Activated T-helper 2 cell treated with anti-CD3 and anti-CD28 coated beads, Interferon-gamma antibody, Interleukin-2, Interleukin-4, amounts not matched to agents 10 μg/mL and 5 μg/mL and 100 μg/mL, durations not matched to agents 14 hours and 24 hours and 36 hours (primary cell): ENCODE measurements at regions of chr4 and their contacts with region 1.

Region 1: GRCh38 chr4:143513306-143514168 is at the start of gene SMARCA5:
- DNase-seq: peak; percentile 97
- H3K4me3 Mint-ChIP-seq: peak within 1 kb of the TSS; percentile 98
- H3K27ac Mint-ChIP-seq: peak within 1 kb of the TSS; percentile 90
- H3K4me1 Mint-ChIP-seq: peaks cover 23% of the 10 kb centered on the region
- H3K27me3 Mint-ChIP-seq: peaks cover 16% of the 10 kb centered on the region
- total RNA-seq, gene SMARCA5: 56.6 and 57.8 TPM in 2 replicates

Region 2: GRCh38 chr4:143184217-143185116 is 329.1 kb before region 1 on chr4 and contains the start of gene USP38:
- intact Hi-C with region 1: loop called (anchors 1 kb)
- DNase-seq: peak; percentile 81
- H3K4me3 Mint-ChIP-seq: peak within 1 kb of the TSS; percentile 89
- H3K27ac Mint-ChIP-seq: peak within 1 kb of the TSS; percentile 96
- H3K4me1 Mint-ChIP-seq: peaks cover 31% of the 10 kb centered on the region
- H3K27me3 Mint-ChIP-seq: no peaks in the 10 kb centered on the region
- total RNA-seq, gene USP38: 23.5 and 26.2 TPM in 2 replicates

Region 3: GRCh38 chr4:143335979-143336780 is 177.4 kb before region 1 on chr4:
- intact Hi-C with region 1: loop called (anchors 1 kb)
- DNase-seq: peak; percentile 23
- H3K4me3 Mint-ChIP-seq: peak overlapping the region; percentile 88
- H3K27ac Mint-ChIP-seq: no peak overlapping the region
- H3K4me1 Mint-ChIP-seq: peaks cover 6% of the 10 kb centered on the region
- H3K27me3 Mint-ChIP-seq: peaks cover 43% of the 10 kb centered on the region

Region 4: DNA sequence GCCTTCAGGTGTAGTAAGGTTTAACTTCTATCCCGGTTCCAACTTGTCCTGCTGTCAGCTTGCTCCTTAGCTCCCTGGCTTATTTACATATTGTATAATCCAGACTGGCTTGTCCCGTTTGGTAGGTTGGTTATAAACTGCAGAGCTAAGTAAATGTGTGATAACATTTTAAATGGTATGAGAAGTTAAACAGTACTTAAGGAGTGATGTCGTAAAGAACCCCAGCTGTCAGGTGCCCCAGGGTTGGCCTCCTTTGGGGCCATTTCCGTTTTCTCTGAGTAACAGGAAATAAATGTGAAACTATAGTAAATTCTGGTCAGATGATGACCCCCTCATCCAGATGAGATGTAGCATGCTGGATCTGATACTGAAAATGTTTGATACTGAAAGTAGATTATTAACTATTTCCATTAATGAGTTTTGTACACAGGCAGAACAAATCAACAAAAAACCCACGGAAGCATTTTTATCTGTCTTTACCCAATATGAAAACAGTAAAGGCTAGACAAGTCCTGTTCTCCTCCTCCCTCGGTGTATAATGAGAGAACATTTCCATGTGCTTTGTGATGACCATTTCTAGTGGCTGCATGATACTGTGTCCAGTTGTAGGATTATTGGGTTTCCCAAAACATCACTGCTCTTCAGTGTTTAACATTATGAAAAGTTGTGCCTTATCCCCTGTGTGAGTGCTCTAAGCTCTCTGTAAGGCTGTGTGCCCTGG is 154.5 kb before region 1 on chr4:
- intact Hi-C with region 1: loop called (anchors 1 kb)
- DNase-seq: peak; percentile 13
- H3K4me3 Mint-ChIP-seq: peak overlapping the region; percentile 58
- H3K27ac Mint-ChIP-seq: peak overlapping the region; percentile 89
- H3K4me1 Mint-ChIP-seq: peaks cover 27% of the 10 kb centered on the region
- H3K27me3 Mint-ChIP-seq: peaks cover 13% of the 10 kb centered on the region

Region 5: GRCh38 chr4:143558823-143559756 is 45.6 kb after region 1 on chr4:
- intact Hi-C with region 1: loop called (anchors 1 kb)
- DNase-seq: peak; percentile 55
- H3K4me3 Mint-ChIP-seq: peak overlapping the region; percentile 88
- H3K27ac Mint-ChIP-seq: peak overlapping the region; percentile 87
- H3K4me1 Mint-ChIP-seq: peaks cover 20% of the 10 kb centered on the region
- H3K27me3 Mint-ChIP-seq: no peaks in the 10 kb centered on the region

Region 6: DNA sequence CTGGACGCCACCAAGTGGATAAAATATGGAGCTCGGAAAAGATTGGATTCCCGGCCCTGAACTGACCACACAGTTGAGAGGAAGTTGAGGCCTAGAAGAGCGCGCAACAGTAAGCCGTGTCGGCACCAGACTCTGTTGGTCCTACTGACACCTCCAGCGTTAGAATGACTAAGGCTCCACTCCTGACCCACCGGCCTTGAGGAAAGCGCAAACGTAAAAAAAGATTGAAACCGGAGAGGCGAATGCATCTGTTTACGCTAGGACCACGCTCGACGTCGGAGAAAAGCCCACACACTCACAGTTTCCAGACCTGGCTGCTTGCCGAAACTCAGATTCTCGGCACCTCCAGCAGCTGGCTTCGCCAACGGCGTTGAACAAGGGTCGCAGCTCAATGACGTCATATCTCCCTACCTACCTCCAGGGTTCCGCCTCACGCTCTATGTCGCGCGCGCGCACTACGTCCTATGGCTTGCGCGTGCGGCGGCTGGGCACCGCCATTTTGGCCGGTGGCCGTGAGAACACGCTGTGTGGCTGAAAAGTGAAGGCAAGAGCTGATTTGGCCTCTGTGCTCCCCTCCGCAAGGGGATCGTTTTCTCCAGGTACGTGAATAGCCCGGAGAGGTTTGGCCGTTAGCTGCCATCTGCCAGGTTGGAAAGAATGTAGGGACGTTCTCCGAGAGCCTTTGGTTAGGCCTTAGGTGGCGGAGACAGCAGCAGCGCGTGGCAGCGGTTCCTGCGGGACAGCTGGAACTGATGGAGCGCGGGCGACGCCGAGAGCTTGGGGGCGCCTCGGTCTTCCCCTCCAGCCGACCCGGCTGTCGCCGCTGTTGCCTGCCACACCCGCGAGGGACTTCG is 1584.5 kb after region 1 on chr4 and contains the starts of genes ABCE1 and ANAPC10:
- intact Hi-C with region 1: loop called (anchors 1 kb)
- DNase-seq: peak; percentile 93
- H3K4me3 Mint-ChIP-seq: peak within 1 kb of the TSS; percentile 95
- H3K27ac Mint-ChIP-seq: peak within 1 kb of the TSS; percentile 99
- H3K4me1 Mint-ChIP-seq: peaks cover 25% of the 10 kb centered on the region
- H3K27me3 Mint-ChIP-seq: no peaks in the 10 kb centered on the region
- total RNA-seq, gene ABCE1: 162 and 173 TPM in 2 replicates
- total RNA-seq, gene ANAPC10: 28.0 and 29.4 TPM in 2 replicates

Region 7: DNA sequence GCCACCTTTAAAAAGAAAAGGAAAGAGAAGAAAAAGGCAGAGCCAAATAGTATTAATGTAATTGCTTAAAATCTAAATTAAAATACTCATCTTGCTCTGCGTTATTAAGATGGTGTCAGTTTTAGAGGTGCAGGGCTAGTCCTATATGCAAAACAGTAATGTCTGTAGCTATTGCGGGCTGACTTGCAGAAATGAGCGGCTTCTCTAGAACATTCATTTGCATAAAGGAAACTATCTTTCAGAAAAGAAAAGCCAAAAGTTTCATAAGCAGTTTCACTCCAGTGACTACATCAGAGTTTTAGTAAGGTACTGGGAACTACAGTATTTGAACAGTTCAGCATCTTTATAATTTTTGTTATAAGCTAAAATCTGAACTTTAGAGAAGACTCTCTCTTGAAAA is 1974.1 kb after region 1 on chr4:
- intact Hi-C with region 1: loop called (anchors 5 kb)
- DNase-seq: no peak
- H3K4me3 Mint-ChIP-seq: peak overlapping the region; percentile 20
- H3K27ac Mint-ChIP-seq: peak overlapping the region; percentile 29
- H3K4me1 Mint-ChIP-seq: peaks cover 17% of the 10 kb centered on the region
- H3K27me3 Mint-ChIP-seq: peaks cover 13% of the 10 kb centered on the region